Natural killer cell (primary cell): ENCODE measurements at regions of chr3 and their contacts with region 1.

Region 1: DNA sequence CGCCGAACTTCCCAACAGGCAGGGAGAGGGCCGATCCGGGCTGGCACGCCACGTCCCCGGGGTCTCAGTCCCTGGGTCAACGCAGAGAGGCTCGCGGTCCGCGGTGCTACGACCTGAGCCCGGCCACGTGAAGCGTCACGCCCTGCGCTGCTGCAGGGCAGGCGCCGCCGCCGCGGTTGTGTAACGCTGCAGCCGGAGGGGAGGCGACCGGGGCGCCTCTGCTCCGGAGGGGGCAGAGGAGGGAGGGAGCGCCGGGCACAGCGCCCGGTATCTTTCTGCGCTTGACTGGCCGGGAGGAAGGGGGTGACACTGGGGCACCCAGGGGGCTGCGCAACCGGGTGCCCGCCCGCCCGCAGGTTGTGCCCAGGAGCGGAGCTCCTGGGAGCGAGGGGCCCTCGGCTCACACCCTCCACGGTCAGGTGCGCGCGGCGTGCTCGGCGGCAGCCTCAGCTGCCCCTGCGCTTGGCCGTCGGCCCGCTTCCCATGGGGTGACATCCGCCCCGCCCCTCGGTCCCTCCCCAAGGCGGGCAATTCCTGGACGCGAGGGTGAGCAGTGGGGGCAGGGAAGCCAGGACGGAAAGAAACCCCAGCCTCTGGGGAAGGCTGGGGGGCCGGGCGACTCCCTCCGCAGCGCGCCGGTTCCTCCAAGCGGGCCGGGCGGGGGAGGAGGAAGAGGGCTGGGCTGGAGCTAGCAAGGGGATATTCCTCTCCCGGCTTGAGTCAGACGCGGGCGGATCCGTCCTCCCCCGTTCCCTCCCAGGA is 852 bp upstream of the BHLHE40 start:
- DNase-seq: peak; percentile 85 to 88
- ATAC-seq: peak; percentile 44 to 66 (median 55)
- H3K4me3 ChIP-seq: peak overlapping the region; percentile 86
- H3K4me3 Mint-ChIP-seq: peak overlapping the region; percentile 99
- H3K27ac ChIP-seq: peak overlapping the region; percentile 96
- H3K27ac Mint-ChIP-seq: peak overlapping the region; percentile 98 to 100
- H3K4me1 ChIP-seq: peaks cover 39% of the 10 kb centered on the region
- H3K4me1 Mint-ChIP-seq: peaks cover 60 to 61% of the 10 kb centered on the region in 2 donors
- H3K27me3 ChIP-seq: no peaks in the 10 kb centered on the region
- H3K27me3 Mint-ChIP-seq: no peaks in the 10 kb centered on the region
- CTCF ChIP-seq: no peak

Region 2: GRCh38 chr3:4722103-4722502 is 256.3 kb before region 1 on chr3:
- intact Hi-C with region 1: loop called (anchors 2 kb)
- DNase-seq: peak in 1 of 2 donors; percentile 55
- ATAC-seq: peak; percentile 76 to 95 (median 91)
- H3K4me3 ChIP-seq: no peak overlapping the region
- H3K4me3 Mint-ChIP-seq: no peak overlapping the region
- H3K27ac ChIP-seq: no peak overlapping the region
- H3K27ac Mint-ChIP-seq: peak overlapping the region; percentile 20 to 34
- H3K4me1 ChIP-seq: peaks cover 6% of the 10 kb centered on the region
- H3K4me1 Mint-ChIP-seq: peaks cover 19 to 28% of the 10 kb centered on the region in 2 donors
- H3K27me3 ChIP-seq: no peaks in the 10 kb centered on the region
- H3K27me3 Mint-ChIP-seq: no peaks in the 10 kb centered on the region
- CTCF ChIP-seq: peak; percentile 53

Region 3: GRCh38 chr3:4821975-4822374 is 156.4 kb before region 1 on chr3:
- intact Hi-C with region 1: loop called (anchors 1 kb)
- DNase-seq: peak; percentile 71 to 95
- ATAC-seq: peak; percentile 88 to 97 (median 93)
- H3K4me3 ChIP-seq: no peak overlapping the region
- H3K4me3 Mint-ChIP-seq: peak overlapping the region; percentile 76
- H3K27ac ChIP-seq: peak overlapping the region; percentile 58
- H3K27ac Mint-ChIP-seq: peak overlapping the region; percentile 59 to 97
- H3K4me1 ChIP-seq: peaks cover 47% of the 10 kb centered on the region
- H3K4me1 Mint-ChIP-seq: peaks cover 51 to 69% of the 10 kb centered on the region in 2 donors
- H3K27me3 ChIP-seq: no peaks in the 10 kb centered on the region
- H3K27me3 Mint-ChIP-seq: no peaks in the 10 kb centered on the region
- CTCF ChIP-seq: no peak

Region 4: DNA sequence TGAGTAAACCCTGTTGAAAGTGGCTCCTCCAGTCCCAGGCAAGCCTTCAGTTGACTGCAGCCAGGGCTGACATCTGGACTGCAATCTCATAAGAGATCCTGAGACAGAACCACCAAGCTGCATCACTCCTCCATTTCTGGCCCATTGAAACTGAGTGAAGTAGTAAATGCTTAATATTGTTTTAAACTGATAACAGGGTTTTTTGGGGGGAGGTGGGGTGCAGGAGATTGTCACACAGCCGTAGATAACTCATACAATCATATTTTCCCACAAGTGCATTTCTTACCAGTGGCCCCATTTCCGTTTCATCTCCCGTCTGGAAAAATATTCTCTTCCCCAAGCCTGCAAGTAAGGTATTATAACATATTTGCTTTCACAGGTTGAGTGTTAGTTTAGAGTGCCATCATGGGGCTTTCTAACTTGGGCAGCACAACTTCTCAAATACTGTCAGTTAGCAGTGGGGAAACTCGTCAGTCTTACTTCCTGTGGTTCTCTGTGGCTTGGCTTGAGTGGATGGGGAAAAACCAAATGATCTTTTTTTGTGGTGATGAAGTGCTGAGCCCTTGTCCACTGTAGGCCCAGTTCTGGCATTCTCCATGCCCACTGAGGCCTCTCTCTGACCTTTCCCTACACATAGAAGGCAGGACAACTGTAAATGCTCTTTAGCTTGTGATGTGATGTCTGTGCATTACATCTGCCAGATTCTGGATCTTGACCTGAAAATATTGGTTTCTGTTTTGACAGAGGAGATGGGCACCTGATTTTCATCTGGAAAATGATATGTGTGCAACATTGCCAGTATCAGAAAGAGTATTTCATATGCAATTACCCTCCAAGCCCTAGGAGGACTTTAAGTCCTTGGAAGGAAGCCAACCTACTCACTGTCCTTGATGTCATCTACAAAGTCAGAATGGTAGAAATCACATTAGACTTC is 89.2 kb before region 1 on chr3:
- intact Hi-C with region 1: loop called (anchors 1 kb)
- DNase-seq: peak; percentile 44 to 77
- ATAC-seq: peak; percentile 88 to 98 (median 94)
- H3K4me3 ChIP-seq: no peak overlapping the region
- H3K4me3 Mint-ChIP-seq: peak overlapping the region; percentile 36
- H3K27ac ChIP-seq: peak overlapping the region; percentile 60
- H3K27ac Mint-ChIP-seq: peak overlapping the region; percentile 85 to 87
- H3K4me1 ChIP-seq: peaks cover 18% of the 10 kb centered on the region
- H3K4me1 Mint-ChIP-seq: peaks cover 16 to 17% of the 10 kb centered on the region in 2 donors
- H3K27me3 ChIP-seq: no peaks in the 10 kb centered on the region
- H3K27me3 Mint-ChIP-seq: no peaks in the 10 kb centered on the region
- CTCF ChIP-seq: no peak

Region 5: GRCh38 chr3:5057857-5058324 is 79.5 kb after region 1 on chr3:
- intact Hi-C with region 1: loop called (anchors 5 kb)
- DNase-seq: peak; percentile 58 to 89
- ATAC-seq: peak; percentile 95 to 98 (median 96)
- H3K4me3 ChIP-seq: no peak overlapping the region
- H3K4me3 Mint-ChIP-seq: no peak overlapping the region
- H3K27ac ChIP-seq: no peak overlapping the region
- H3K27ac Mint-ChIP-seq: no peak overlapping the region
- H3K4me1 ChIP-seq: peaks cover 32% of the 10 kb centered on the region
- H3K4me1 Mint-ChIP-seq: peaks cover 17 to 31% of the 10 kb centered on the region in 2 donors
- H3K27me3 ChIP-seq: no peaks in the 10 kb centered on the region
- H3K27me3 Mint-ChIP-seq: peaks cover 4 to 7% of the 10 kb centered on the region in 2 donors
- CTCF ChIP-seq: peak; percentile 79

Region 6: DNA sequence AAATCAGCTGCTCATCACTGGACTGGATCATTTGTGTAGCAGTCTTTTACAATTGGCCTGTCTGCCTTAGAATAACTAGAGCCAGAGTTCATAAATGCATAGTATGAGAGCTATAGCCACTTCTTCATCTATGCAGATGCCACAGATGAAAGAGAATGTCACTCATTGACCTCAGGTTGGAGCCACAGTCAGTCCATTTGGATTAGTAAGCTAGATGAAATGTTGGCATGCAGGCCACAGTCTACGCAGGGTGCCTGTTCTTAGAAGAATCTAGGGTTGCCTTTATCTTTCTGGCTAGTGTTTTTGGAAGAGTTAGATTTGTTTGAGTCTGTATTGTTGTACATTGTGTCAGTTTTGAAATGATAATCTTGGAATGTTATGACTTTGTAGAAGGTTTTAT is 183.7 kb after region 1 on chr3:
- intact Hi-C with region 1: no loop called
- DNase-seq: no peak
- ATAC-seq: no peak
- H3K4me3 ChIP-seq: no peak overlapping the region
- H3K4me3 Mint-ChIP-seq: no peak overlapping the region
- H3K27ac ChIP-seq: no peak overlapping the region
- H3K27ac Mint-ChIP-seq: peak overlapping the region; percentile 15 to 37
- H3K4me1 ChIP-seq: no peaks in the 10 kb centered on the region
- H3K4me1 Mint-ChIP-seq: peaks cover 66 to 70% of the 10 kb centered on the region in 2 donors
- H3K27me3 ChIP-seq: no peaks in the 10 kb centered on the region
- H3K27me3 Mint-ChIP-seq: no peaks in the 10 kb centered on the region
- CTCF ChIP-seq: no peak